Natural killer cell (primary cell): ENCODE measurements at regions of chr3 and their contacts with region 1.

Region 1: GRCh38 chr3:193592944-193593667 is at the start of gene OPA1:
- DNase-seq: peak; percentile 86 to 95
- ATAC-seq: peak; percentile 93 to 96 (median 96)
- H3K4me3 ChIP-seq: peak within 1 kb of the TSS; percentile 77
- H3K4me3 Mint-ChIP-seq: peak within 1 kb of the TSS; percentile 94
- H3K27ac ChIP-seq: peak within 1 kb of the TSS; percentile 84
- H3K27ac Mint-ChIP-seq: peak within 1 kb of the TSS; percentile 87 to 93
- H3K4me1 ChIP-seq: peaks cover 22% of the 10 kb centered on the region
- H3K4me1 Mint-ChIP-seq: peaks cover 43 to 46% of the 10 kb centered on the region in 2 donors
- H3K27me3 ChIP-seq: no peaks in the 10 kb centered on the region
- H3K27me3 Mint-ChIP-seq: no peaks in the 10 kb centered on the region
- CTCF ChIP-seq: no peak
- total RNA-seq, gene OPA1: 52.6 to 72.0 (median 57.5) TPM

Region 2: DNA sequence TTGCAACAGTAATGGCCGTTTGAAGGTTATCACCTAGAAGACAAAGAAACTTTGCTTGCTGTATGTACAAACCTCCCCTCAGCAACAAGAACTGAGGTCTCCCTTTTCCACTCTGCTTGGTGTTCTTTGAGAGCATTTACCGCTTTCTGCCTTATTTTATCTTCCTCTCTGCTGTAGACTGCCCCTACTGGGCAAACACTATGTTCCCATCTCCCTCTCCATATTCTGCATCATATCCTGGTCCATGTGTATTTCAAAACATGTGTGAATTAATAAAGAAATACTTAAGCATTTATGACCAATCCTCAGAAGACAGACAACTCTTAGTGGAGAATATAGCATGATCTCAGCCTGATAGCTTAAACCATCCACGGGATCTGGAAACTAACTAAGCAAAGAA is 278.9 kb before region 1 on chr3:
- intact Hi-C with region 1: no loop called
- DNase-seq: no peak
- ATAC-seq: no peak
- H3K4me3 ChIP-seq: no peak overlapping the region
- H3K4me3 Mint-ChIP-seq: no peak overlapping the region
- H3K27ac ChIP-seq: no peak overlapping the region
- H3K27ac Mint-ChIP-seq: no peak overlapping the region
- H3K4me1 ChIP-seq: no peaks in the 10 kb centered on the region
- H3K4me1 Mint-ChIP-seq: no peaks in the 10 kb centered on the region
- H3K27me3 ChIP-seq: no peaks in the 10 kb centered on the region
- H3K27me3 Mint-ChIP-seq: no peaks in the 10 kb centered on the region
- CTCF ChIP-seq: no peak

Region 3: GRCh38 chr3:194134757-194135528 is 541.8 kb after region 1 on chr3:
- intact Hi-C with region 1: loop called (anchors 10 kb)
- DNase-seq: peak; percentile 77 to 89
- ATAC-seq: peak; percentile 46 to 72 (median 59)
- H3K4me3 ChIP-seq: peak overlapping the region; percentile 48
- H3K4me3 Mint-ChIP-seq: peak overlapping the region; percentile 93
- H3K27ac ChIP-seq: peak overlapping the region; percentile 60
- H3K27ac Mint-ChIP-seq: peak overlapping the region; percentile 86 to 94
- H3K4me1 ChIP-seq: peaks cover 50% of the 10 kb centered on the region
- H3K4me1 Mint-ChIP-seq: peaks cover 38 to 45% of the 10 kb centered on the region in 2 donors
- H3K27me3 ChIP-seq: peaks cover 78% of the 10 kb centered on the region
- H3K27me3 Mint-ChIP-seq: peaks cover 60 to 66% of the 10 kb centered on the region in 2 donors
- CTCF ChIP-seq: no peak